ENCODE measurements at regions of chr19 and their contacts with region 1.

Region 1: GRCh38 chr19:15107061-15108010 is at the start of gene SYDE1:
- DNase-seq: peak; percentile 56 to 70
- H3K4me3 ChIP-seq: peak within 1 kb of the TSS; percentile 64
- H3K4me3 Mint-ChIP-seq: peak within 1 kb of the TSS; percentile 68
- H3K27ac Mint-ChIP-seq: peak within 1 kb of the TSS; percentile 40
- H3K4me1 ChIP-seq: 0 out of 2 replicates have a peak, but pooled peaks cover 8% of the 10 kb centered on the region
- H3K4me1 Mint-ChIP-seq: peaks cover 9% of the 10 kb centered on the region
- H3K27me3 ChIP-seq: no peaks in the 10 kb centered on the region
- H3K27me3 Mint-ChIP-seq: no peaks in the 10 kb centered on the region
- CTCF ChIP-seq: no peak
- total RNA-seq, gene SYDE1: 4.0 and 4.4 TPM in 2 replicates

Region 2: GRCh38 chr19:15125232-15126067 is 18.1 kb after region 1 on chr19:
- CTCF ChIA-PET with region 1: no interaction called
- POLR2A ChIA-PET with region 1: interaction called, 3 read pairs
- intact Hi-C with region 1: loop called (anchors 2 kb)
- DNase-seq: peak; percentile 98 to 99
- H3K4me3 ChIP-seq: peak overlapping the region; percentile 99
- H3K4me3 Mint-ChIP-seq: peak overlapping the region; percentile 100
- H3K27ac Mint-ChIP-seq: peak overlapping the region; percentile 100
- H3K4me1 ChIP-seq: 0 out of 2 replicates have a peak, but pooled peaks cover 4% of the 10 kb centered on the region
- H3K4me1 Mint-ChIP-seq: peaks cover 6% of the 10 kb centered on the region
- H3K27me3 ChIP-seq: no peaks in the 10 kb centered on the region
- H3K27me3 Mint-ChIP-seq: no peaks in the 10 kb centered on the region
- CTCF ChIP-seq: no peak